Activated T-helper 2 cell treated with anti-CD3 and anti-CD28 coated beads, Interferon-gamma antibody, Interleukin-2, Interleukin-4, amounts not matched to agents 10 μg/mL and 5 μg/mL and 100 μg/mL, durations not matched to agents 14 hours and 24 hours and 36 hours (primary cell): ENCODE measurements at regions of chr18 and their contacts with region 1.

Region 1: DNA sequence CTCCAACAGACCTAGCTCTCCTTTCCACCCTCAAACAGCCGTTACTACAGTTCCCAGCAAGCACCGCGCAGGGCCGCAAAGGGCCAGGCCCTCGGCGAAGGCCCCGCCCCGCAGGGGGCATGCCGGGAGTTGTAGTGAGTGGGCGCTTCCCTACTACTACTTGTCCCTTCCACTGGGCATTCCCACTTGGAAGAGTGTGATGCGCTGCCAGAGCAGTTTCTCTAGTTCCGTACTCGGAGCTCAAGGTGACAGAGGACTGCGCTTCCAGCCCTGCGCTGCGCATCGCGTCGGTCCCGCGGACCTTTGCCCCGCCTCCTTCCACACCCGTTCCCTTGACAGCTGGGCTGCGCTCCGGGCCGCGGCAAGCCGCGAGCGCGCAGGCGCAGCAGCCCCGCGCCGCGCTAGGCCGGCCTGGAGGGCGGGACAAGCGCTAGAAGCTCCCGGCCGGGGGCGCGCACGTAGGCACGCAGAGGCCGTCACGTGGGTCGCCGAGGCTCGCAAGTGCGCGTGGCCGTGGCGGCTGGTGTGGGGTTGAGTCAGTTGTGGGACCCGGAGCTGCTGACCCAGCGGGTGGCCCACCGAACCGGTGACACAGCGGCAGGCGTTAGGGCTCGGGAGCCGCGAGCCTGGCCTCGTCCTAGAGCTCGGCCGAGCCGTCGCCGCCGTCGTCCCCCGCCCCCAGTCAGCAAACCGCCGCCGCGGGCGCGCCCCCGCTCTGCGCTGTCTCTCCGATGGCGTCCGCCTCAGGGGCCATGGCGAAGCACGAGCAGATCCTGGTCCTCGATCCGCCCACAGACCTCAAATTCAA is at the start of gene VAPA:
- DNase-seq: peak; percentile 92
- H3K4me3 Mint-ChIP-seq: peak within 1 kb of the TSS; percentile 87
- H3K27ac Mint-ChIP-seq: peak within 1 kb of the TSS; percentile 90
- H3K4me1 Mint-ChIP-seq: peaks cover 24% of the 10 kb centered on the region
- H3K27me3 Mint-ChIP-seq: peaks cover 16% of the 10 kb centered on the region
- total RNA-seq, gene VAPA: 216 and 223 TPM in 2 replicates

Region 2: GRCh38 chr18:9334329-9334972 is 579.3 kb before region 1 on chr18 and contains the start of gene TWSG1:
- intact Hi-C with region 1: loop called (anchors 10 kb)
- DNase-seq: peak; percentile 89
- H3K4me3 Mint-ChIP-seq: peak within 1 kb of the TSS; percentile 84
- H3K27ac Mint-ChIP-seq: peak within 1 kb of the TSS; percentile 65
- H3K4me1 Mint-ChIP-seq: peaks cover 19% of the 10 kb centered on the region
- H3K27me3 Mint-ChIP-seq: peaks cover 25% of the 10 kb centered on the region
- total RNA-seq, gene TWSG1: 12.1 and 12.9 TPM in 2 replicates

Region 3: GRCh38 chr18:9614401-9615279 is 299.1 kb before region 1 on chr18 and contains the start of gene PPP4R1:
- intact Hi-C with region 1: loop called (anchors 2 kb)
- DNase-seq: peak; percentile 58
- H3K4me3 Mint-ChIP-seq: peak within 1 kb of the TSS; percentile 93
- H3K27ac Mint-ChIP-seq: peak within 1 kb of the TSS; percentile 77
- H3K4me1 Mint-ChIP-seq: peaks cover 42% of the 10 kb centered on the region
- H3K27me3 Mint-ChIP-seq: peaks cover 27% of the 10 kb centered on the region
- total RNA-seq, gene PPP4R1: 44.3 and 48.8 TPM in 2 replicates

Region 4: GRCh38 chr18:9861157-9861556 is 52.6 kb before region 1 on chr18:
- intact Hi-C with region 1: loop called (anchors 1 kb)
- DNase-seq: no peak
- H3K4me3 Mint-ChIP-seq: no peak overlapping the region
- H3K27ac Mint-ChIP-seq: peak overlapping the region; percentile 95
- H3K4me1 Mint-ChIP-seq: peaks cover 32% of the 10 kb centered on the region
- H3K27me3 Mint-ChIP-seq: peaks cover 6% of the 10 kb centered on the region

Region 5: GRCh38 chr18:9898792-9899549 is 14.8 kb before region 1 on chr18:
- intact Hi-C with region 1: loop called (anchors 1 kb)
- DNase-seq: no peak
- H3K4me3 Mint-ChIP-seq: peak overlapping the region; percentile 27
- H3K27ac Mint-ChIP-seq: peak overlapping the region; percentile 80
- H3K4me1 Mint-ChIP-seq: peaks cover 32% of the 10 kb centered on the region
- H3K27me3 Mint-ChIP-seq: no peaks in the 10 kb centered on the region

Region 6: GRCh38 chr18:10525371-10526210 is 611.9 kb after region 1 on chr18 and contains the start of gene NAPG:
- intact Hi-C with region 1: loop called (anchors 5 kb)
- DNase-seq: peak; percentile 91
- H3K4me3 Mint-ChIP-seq: peak within 1 kb of the TSS; percentile 97
- H3K27ac Mint-ChIP-seq: peak within 1 kb of the TSS; percentile 98
- H3K4me1 Mint-ChIP-seq: peaks cover 43% of the 10 kb centered on the region
- H3K27me3 Mint-ChIP-seq: peaks cover 12% of the 10 kb centered on the region
- total RNA-seq, gene NAPG: 35.2 and 35.3 TPM in 2 replicates